MCF 10A (cell line): ENCODE measurements at regions of chr17 and their contacts with region 1.

Region 1: GRCh38 chr17:18038861-18039534 is at the starts of genes ATPAF2 and GID4:
- DNase-seq: peak; percentile 99
- H3K4me3 Mint-ChIP-seq: peak within 1 kb of the TSS; percentile 75
- H3K27ac Mint-ChIP-seq: peak within 1 kb of the TSS; percentile 72
- H3K4me1 Mint-ChIP-seq: peaks cover 40% of the 10 kb centered on the region
- H3K27me3 Mint-ChIP-seq: no peaks in the 10 kb centered on the region
- CTCF ChIP-seq: no peak
- total RNA-seq, gene ATPAF2: 12.4 and 18.6 TPM in 2 replicates
- total RNA-seq, gene GID4: 9.8 and 11.0 TPM in 2 replicates

Region 2: DNA sequence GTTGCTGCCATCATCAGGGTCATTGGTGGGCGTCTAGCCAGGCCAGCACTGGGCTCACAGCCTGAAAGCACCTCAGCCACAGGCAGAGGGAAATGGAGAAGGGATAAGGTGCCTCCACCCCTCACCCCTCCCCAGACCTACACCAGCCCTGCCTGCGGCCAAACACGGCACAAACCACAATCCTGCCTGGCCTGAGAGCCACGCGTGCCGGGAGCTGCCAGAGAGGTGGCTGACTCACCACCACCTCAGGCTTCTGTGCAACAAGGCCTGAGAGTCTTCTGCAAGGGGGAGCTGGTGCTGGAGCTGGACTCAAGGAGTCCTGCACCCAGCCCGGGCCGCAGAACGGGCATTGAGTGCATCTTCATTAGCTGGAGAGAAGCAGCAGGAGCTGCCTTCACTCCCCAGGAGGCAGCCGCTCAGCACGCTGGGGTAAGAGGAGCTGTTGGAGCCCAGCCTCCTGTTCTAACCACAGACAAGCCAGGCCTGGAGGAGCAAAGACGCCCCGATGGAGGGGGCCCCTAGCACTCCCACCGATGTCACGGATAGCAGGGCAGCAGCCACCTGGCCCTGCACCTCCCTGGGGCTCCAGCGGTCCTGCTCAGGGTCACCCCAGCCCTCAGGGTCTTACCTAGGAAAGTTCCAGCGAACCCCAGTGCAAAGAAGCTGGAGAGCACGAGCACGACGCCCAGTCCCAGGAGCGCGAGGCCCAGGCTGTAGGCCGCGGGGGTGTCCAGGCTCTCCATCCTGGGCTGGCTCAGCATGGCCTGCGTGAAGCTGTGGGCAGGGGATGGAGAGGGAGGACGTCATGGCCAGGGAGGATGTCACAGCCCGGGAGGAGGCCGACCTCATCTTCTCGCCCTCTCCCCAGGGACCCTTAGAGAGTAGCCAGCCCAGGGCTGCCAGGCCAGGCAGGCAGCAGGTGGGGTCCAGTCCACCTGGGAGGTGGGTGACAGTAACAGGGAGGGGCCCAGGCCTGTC is 526.8 kb before region 1 on chr17:
- CTCF ChIA-PET with region 1: no interaction called
- POLR2A ChIA-PET with region 1: no interaction called
- intact Hi-C with region 1: no loop called
- DNase-seq: peak; percentile 90
- H3K4me3 Mint-ChIP-seq: no peak overlapping the region
- H3K27ac Mint-ChIP-seq: peak overlapping the region; percentile 41
- H3K4me1 Mint-ChIP-seq: peaks cover 15% of the 10 kb centered on the region
- H3K27me3 Mint-ChIP-seq: no peaks in the 10 kb centered on the region
- CTCF ChIP-seq: no peak

Region 3: DNA sequence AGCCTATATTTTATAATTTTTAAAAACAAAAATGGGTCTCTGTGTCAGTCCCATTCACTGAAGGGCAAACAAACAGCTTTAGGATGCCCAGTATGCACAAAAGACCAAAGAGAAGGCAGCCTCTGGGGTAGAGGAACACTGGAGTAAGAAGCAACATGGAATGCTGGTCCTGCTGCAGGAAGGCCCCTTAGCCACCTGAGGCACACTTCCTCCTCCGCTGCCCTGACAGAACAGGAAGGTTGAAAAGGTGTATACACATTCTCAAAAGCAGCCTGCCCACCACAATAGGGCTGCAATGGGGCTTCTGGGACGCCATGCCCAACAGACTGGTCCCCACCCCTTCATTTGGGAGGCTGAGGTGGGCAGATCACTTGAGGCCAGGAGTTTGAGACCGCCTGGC is 86.3 kb before region 1 on chr17:
- CTCF ChIA-PET with region 1: no interaction called
- POLR2A ChIA-PET with region 1: no interaction called
- intact Hi-C with region 1: no loop called
- DNase-seq: no peak
- H3K4me3 Mint-ChIP-seq: no peak overlapping the region
- H3K27ac Mint-ChIP-seq: no peak overlapping the region
- H3K4me1 Mint-ChIP-seq: peaks cover 6% of the 10 kb centered on the region
- H3K27me3 Mint-ChIP-seq: no peaks in the 10 kb centered on the region
- CTCF ChIP-seq: no peak

Region 4: DNA sequence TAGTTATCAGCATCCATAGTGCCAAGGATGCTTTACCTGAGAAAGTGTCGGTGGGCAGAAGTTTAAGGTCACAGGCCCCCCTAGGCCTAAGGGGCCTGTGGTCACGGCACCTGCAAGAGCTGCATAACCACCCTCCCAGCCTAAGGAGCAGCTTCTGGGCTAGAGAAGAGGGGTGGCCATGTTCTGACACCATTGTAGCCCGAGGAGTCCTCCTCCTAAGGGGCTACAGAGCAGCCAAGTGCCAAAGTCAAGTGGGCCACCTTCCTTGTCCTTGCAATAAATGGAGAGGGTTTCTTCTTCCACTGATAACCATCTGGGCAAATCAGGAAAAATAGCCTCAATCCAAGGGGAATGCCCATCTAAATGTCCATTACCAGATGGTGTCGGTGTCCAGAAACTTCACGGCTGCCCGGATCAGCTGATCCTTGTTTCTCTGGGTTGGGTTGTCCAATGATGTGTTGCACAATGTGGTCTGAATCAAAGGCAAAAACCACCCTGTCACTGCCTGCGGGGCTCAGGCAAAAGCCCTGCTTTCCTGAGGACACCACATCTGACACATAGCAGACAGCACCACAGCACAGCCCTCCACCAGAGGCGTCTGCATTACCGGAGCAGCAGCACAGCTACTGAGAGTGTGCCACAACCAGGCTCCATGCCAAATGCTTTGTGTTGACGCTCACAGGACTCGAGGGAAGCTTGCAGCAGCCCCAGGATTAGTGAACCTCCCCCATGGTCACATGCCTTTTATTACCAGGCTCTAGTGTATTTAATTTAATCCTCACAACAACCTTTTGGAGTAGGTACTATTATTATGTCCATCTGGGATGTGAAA is 12.8 kb before region 1 on chr17:
- CTCF ChIA-PET with region 1: interaction called, 6 read pairs
- POLR2A ChIA-PET with region 1: interaction called, 11 read pairs
- intact Hi-C with region 1: no loop called
- DNase-seq: peak; percentile 88
- H3K4me3 Mint-ChIP-seq: peak overlapping the region; percentile 26
- H3K27ac Mint-ChIP-seq: peak overlapping the region; percentile 46
- H3K4me1 Mint-ChIP-seq: peaks cover 15% of the 10 kb centered on the region
- H3K27me3 Mint-ChIP-seq: no peaks in the 10 kb centered on the region
- CTCF ChIP-seq: no peak